ENCODE measurements at regions of chr17 and their contacts with region 1.

Region 1: DNA sequence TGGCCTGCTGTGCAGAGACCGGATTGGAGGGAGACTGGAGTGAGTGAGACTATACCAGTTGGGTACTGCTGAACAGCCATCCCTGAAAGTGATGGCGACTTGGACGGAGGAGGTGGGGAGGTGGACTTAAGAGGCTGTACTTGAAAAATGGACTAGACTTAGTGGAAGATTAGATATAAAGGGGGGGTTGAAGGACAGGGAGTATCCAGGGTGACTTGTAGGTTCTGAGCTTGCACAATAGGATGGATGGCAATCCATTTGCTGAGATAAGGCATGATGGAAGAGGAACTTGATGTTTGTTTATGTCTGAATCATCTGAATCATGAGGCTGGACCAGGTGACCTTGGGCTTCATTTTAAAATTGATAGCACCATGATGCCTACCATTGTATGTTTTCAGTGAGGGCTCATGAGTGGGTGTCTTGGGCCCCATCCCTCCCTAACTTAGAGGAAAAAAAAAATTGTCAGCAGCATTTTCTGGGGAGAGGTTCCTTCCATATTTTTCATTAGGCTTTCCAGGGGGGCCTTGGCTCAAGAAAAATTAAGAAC is 41.2 kb downstream of the PRKCA start:
- DNase-seq: peak; percentile 49 to 88 (median 65)
- ATAC-seq: peak; percentile 72
- H3K4me3 ChIP-seq: no peak overlapping the region
- H3K27ac ChIP-seq: peak overlapping the region; percentile 67
- H3K4me1 ChIP-seq: peaks cover 14 to 66% of the 10 kb centered on the region in 2 experiments
- H3K27me3 ChIP-seq: no peaks in the 10 kb centered on the region
- CTCF ChIP-seq: no peak
- EP300 ChIP-seq: peak; percentile 97
- POLR2A ChIP-seq: no peak
- RAD21 ChIP-seq: no peak

Region 2: DNA sequence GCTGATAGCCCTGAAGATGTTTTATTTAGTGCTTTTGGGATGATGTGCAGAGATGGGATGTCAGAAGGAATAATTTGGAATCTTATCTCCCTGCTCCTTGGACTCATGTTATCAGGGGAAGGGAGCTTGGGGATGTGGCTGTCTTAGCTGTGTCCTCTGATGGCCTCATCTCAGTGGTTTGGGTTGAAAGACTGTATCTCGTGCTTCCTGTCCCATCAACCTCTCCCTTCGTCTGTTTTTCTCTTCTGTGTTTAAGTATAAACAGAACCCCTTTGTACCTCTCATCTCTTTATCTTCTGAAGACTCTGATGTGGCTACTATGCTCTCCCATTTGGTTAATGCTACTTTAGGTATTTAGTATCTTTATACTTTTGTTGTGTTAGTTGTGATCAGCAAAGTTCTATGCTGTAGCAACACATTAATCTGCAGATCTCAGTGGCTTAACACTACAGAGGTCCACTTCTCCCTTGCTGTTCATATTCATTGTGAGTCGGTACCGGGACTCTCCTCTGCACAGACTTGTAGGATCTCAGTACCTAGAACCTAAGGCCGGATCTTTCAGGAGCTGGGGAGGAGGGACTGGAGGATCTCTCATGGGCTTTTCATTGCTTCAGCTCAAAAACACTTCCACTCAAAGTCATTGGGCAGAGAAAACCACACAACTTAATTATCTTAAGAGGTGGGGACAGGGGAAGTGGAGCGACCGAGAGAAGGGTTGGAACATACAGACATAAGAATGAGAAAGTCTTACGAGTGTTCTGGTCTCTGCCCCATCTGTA is 12.4 kb before region 1 on chr17:
- CTCF ChIA-PET with region 1: no interaction called
- POLR2A ChIA-PET with region 1: interaction called, 11 read pairs
- in situ Hi-C with region 1: no loop called
- intact Hi-C with region 1: no loop called
- DNase-seq: peak in 3 of 4 experiments; percentile 23 to 57 (median 53)
- ATAC-seq: peak; percentile 86
- H3K4me3 ChIP-seq: no peak overlapping the region
- H3K27ac ChIP-seq: peak overlapping the region; percentile 20; the same call in 2 of the 3 replicates
- H3K4me1 ChIP-seq: peaks cover 8 to 17% of the 10 kb centered on the region in 2 experiments; a peak in 4 of 5 replicates
- H3K27me3 ChIP-seq: no peaks in the 10 kb centered on the region
- CTCF ChIP-seq: no peak
- EP300 ChIP-seq: peak; percentile 70
- POLR2A ChIP-seq: no peak
- RAD21 ChIP-seq: no peak

Measured in K562 (cell line).